CD4-positive, alpha-beta memory T cell (primary cell): ENCODE measurements at regions of chr1 and their contacts with region 1.

Region 1: DNA sequence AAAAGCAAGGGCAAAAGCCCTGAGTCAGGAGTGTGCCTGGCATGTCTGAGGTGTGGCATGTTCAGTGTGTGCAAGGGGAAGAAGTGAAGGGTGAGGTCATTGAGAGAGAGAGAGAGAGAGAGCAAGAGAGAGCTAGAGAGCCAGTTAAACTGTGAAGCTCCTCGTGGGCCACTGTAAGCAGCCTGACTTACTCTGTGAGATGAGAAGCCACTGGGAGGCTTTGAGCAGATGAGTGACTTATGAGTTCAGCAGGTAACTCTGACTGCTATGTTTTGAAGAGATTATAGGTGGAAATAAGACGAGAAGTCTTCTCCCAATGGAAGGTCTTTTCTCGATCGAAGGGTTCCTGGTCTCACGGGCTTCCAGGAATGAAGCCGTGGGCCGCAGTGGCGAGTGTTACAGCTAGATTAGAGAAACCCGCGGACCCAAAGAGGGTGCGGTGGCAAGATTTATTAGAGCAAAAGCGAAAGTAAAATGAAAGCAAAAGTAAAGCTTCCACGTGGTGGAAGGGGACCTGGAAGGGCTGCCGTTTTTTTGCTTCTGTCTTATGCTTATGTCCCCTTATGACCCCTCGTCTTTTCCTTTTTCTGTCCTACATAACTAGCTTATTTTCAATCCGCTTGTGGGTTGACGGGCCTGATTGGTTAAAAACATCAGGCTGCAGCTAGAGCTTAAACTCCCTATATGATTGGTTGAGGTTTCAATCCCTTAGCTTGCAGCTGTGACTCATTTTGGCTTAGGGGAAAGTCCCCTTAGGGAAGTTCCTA is 323.1 kb upstream of the FAM78B start:
- DNase-seq: peak; percentile 56 to 70 (median 62)
- H3K4me3 ChIP-seq: peak overlapping the region; percentile 20 to 68
- H3K4me3 Mint-ChIP-seq: no peak overlapping the region
- H3K27ac ChIP-seq: peak overlapping the region; percentile 80
- H3K27ac Mint-ChIP-seq: no peak overlapping the region
- H3K4me1 ChIP-seq: peaks cover 23% of the 10 kb centered on the region
- H3K4me1 Mint-ChIP-seq: peaks cover 0 to 18% (median 7%) of the 10 kb centered on the region in 4 donors
- H3K27me3 ChIP-seq: no peaks in the 10 kb centered on the region
- H3K27me3 Mint-ChIP-seq: peaks cover 1 to 5% of the 10 kb centered on the region in 2 donors

Region 2: GRCh38 chr1:166479052-166479631 is 10.7 kb before region 1 on chr1:
- CTCF ChIA-PET with region 1: interaction called, 81 read pairs
- POLR2A ChIA-PET with region 1: interaction called, 8 read pairs
- intact Hi-C with region 1: no loop called
- DNase-seq: peak; percentile 26 to 39 (median 38)
- H3K4me3 ChIP-seq: no peak overlapping the region
- H3K4me3 Mint-ChIP-seq: no peak overlapping the region
- H3K27ac ChIP-seq: no peak overlapping the region
- H3K27ac Mint-ChIP-seq: no peak overlapping the region
- H3K4me1 ChIP-seq: no peaks in the 10 kb centered on the region
- H3K4me1 Mint-ChIP-seq: peaks cover 0 to 2% (median 0%) of the 10 kb centered on the region in 4 donors
- H3K27me3 ChIP-seq: no peaks in the 10 kb centered on the region
- H3K27me3 Mint-ChIP-seq: no peaks in the 10 kb centered on the region

Region 3: DNA sequence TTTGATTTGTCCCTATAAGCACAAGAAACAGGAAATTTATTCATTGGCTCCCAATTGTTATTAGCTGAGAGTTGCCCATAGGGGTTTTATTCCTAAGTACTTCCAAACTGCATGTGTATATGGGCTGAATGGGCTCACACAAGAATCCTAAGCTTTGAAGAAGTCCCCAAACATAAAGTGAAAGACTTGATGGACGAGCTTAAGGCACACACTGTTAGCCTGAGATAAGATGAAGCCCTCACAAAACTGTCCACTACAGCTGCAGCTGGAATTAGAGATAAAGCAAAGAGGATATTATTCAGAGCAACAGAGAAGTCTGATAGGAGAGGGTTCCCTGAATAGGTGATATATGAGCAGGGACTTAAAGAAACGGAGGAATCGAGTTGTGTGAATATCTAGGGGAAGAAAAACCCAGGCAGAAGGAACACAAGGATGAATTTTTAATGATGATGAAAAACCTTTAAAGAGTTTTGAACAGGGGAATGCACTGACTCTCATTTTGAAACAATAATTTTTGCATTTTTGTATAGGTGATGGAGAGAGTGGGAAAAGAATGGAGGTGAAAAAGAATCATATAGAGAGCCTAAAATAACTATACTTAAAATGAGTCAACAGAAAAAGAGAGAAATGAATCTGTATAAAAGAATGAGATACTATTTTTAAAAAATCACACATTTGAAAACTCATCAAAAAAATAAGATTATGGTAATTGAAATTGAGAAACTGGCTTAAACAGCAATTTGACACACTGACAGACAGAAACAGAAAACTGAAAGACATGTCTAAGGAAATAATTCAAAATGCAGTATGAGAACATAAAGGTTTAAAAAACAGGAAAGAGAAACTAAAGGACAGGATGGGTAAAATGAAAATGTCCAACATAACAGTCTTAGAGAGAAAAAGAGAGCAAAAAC is 215.8 kb after region 1 on chr1:
- CTCF ChIA-PET with region 1: no interaction called
- POLR2A ChIA-PET with region 1: no interaction called
- intact Hi-C with region 1: no loop called
- DNase-seq: no peak
- H3K4me3 ChIP-seq: no peak overlapping the region
- H3K4me3 Mint-ChIP-seq: no peak overlapping the region
- H3K27ac ChIP-seq: no peak overlapping the region
- H3K27ac Mint-ChIP-seq: peak overlapping the region in 1 of 7 donors; percentile 15
- H3K4me1 ChIP-seq: no peaks in the 10 kb centered on the region
- H3K4me1 Mint-ChIP-seq: no peaks in the 10 kb centered on the region
- H3K27me3 ChIP-seq: no peaks in the 10 kb centered on the region
- H3K27me3 Mint-ChIP-seq: peaks cover 9 to 16% of the 10 kb centered on the region in 2 donors